ENCODE measurements at regions of chr2 and their contacts with region 1.

Region 1: GRCh38 chr2:59732871-59733566 is 820.4 kb downstream of the BCL11A start:
- DNase-seq: no peak
- ATAC-seq: no peak
- H3K4me3 ChIP-seq: no peak overlapping the region
- H3K27ac ChIP-seq: no peak overlapping the region
- H3K4me1 ChIP-seq: peaks cover 0 to 5% (median 0%) of the 10 kb centered on the region in 9 donors
- H3K27me3 ChIP-seq: peaks cover 0 to 3% (median 0%) of the 10 kb centered on the region in 7 donors
- CTCF ChIP-seq: no peak

Region 2: DNA sequence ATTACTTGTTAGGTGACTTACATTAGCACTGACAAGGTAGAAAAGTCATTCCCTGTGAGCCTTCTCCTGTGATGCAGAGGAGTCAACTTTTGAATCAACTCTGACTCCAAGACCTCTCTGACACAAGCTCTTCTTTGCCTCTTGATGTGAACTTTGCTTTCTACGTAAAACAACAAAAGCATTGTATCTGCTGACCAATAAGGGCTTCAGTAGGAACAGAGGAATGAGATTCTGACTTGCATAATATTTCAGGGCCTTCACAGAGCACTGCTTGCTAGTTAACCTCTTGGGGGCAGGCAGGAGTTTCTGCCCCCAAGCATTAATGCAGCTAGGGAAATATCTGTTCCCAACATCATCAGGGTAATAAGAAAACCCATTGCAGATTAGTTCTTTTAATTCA is 28.9 kb after region 1 on chr2:
- intact Hi-C with region 1: loop called in 1 of 10 experiments (anchors 1 kb)
- DNase-seq: no peak
- ATAC-seq: no peak
- H3K4me3 ChIP-seq: no peak overlapping the region
- H3K27ac ChIP-seq: no peak overlapping the region
- H3K4me1 ChIP-seq: no peaks in the 10 kb centered on the region
- H3K27me3 ChIP-seq: no peaks in the 10 kb centered on the region
- CTCF ChIP-seq: no peak

Measured in heart right ventricle (tissue), 16 donors.